Esophagus squamous epithelium (tissue), 5 donors: ENCODE measurements at regions of chr5 and their contacts with region 1.

Region 1: DNA sequence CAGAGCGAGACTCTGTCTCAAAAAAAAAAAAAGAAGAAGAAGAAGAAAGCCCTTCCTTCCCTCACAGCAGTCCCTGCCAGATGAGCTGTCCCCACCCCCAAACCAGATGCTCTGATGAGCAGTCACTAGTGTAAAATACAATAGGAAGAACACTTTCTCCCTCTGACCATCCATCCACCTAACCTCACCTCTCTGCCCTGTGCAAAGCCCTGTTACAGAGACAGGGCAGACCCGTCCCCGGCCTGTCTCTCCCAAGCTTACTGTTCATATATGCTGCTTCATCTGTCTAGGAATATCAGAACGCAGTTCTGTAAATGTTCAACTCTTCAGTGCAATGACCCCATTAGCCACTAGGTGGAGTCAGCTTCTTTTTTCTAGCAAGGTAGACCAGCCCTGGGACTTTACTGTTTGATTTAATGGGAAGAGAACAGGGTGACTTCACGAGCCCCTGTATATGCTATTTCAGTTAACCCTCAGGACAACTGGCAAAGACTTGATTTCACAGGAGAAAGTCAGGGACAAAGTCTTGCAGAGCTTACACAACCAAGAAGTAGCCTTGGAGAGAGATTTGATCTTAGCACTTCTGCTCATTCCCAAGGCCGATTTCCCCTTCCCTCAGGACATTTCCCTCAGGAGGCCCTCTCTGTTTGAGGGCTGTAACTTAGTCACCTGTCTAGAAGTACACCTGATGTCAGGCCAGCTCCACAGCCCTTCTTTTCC is 14.9 kb upstream of the FGFR4 start:
- DNase-seq: no peak
- H3K4me3 ChIP-seq: no peak overlapping the region
- H3K27ac ChIP-seq: no peak overlapping the region
- H3K4me1 ChIP-seq: no peaks in the 10 kb centered on the region
- H3K27me3 ChIP-seq: no peaks in the 10 kb centered on the region
- CTCF ChIP-seq: peak; percentile 66 to 90 (median 87)
- POLR2A ChIP-seq: no peak

Region 2: DNA sequence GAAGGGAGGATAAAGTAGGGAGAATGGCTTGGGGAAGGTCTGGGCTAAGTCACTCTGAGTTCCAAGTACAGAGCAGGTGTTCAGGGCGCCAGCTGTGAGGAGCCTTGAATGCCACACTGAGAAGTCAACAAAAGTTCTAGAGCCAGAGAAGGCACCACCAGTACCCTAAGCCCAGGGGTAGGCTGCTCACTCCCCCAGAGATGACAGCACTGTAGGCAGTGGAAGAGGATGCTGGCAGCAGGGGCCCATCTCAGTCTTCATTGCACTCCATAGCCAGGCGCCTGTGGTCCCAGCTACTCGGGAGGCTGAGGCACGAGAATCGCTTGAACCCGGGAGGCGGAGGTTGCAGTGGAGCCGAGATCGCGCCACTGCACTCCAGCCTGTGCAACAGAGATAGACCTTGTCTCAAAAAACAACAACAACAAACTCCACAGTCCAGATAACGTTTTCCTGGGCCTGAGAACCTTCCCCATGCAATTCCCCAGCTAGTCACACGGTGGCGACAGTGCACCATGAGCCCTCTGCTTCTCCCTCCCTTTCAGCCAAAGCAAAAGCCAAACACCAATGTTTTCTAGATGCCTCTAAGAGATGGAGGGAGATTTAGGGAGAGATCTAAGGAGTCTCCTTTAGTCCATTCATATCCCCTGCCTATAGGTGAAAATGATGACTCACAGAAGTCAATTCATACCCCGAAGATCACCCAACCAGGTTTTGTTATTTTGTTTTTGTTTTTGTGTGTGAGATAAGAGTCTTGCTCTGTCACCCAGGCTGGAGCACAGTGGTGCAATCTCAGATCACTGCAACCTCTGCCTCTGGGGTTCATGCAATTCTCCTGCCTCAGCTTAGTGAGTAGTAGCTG is 42.0 kb after region 1 on chr5:
- intact Hi-C with region 1: loop called (anchors 5 kb)
- DNase-seq: no peak
- H3K4me3 ChIP-seq: no peak overlapping the region
- H3K27ac ChIP-seq: peak overlapping the region in 2 of 4 donors; percentile 58 to 69
- H3K4me1 ChIP-seq: peaks cover 0 to 32% (median 14%) of the 10 kb centered on the region in 3 donors
- H3K27me3 ChIP-seq: no peaks in the 10 kb centered on the region
- CTCF ChIP-seq: peak; percentile 93 to 99 (median 98)
- POLR2A ChIP-seq: no peak

Region 3: GRCh38 chr5:177241768-177242167 is 169.9 kb after region 1 on chr5:
- intact Hi-C with region 1: no loop called
- DNase-seq: no peak
- H3K4me3 ChIP-seq: no peak overlapping the region
- H3K27ac ChIP-seq: no peak overlapping the region
- H3K4me1 ChIP-seq: no peaks in the 10 kb centered on the region
- H3K27me3 ChIP-seq: no peaks in the 10 kb centered on the region
- CTCF ChIP-seq: no peak
- POLR2A ChIP-seq: no peak